Heart left ventricle (tissue), 16 donors: ENCODE measurements at regions of chrX and their contacts with region 1.

Region 1: GRCh38 chrX:38335382-38335781 is 8.1 kb upstream of the RPGR start:
- DNase-seq: no peak
- ATAC-seq: no peak
- H3K4me3 ChIP-seq: no peak overlapping the region
- H3K27ac ChIP-seq: no peak overlapping the region
- H3K4me1 ChIP-seq: no peaks in the 10 kb centered on the region
- H3K27me3 ChIP-seq: peaks cover 0 to 29% (median 0%) of the 10 kb centered on the region in 9 donors
- CTCF ChIP-seq: peak in 5 of 12 donors; percentile 19 to 38 (median 31)
- POLR2A ChIP-seq: no peak

Region 2: DNA sequence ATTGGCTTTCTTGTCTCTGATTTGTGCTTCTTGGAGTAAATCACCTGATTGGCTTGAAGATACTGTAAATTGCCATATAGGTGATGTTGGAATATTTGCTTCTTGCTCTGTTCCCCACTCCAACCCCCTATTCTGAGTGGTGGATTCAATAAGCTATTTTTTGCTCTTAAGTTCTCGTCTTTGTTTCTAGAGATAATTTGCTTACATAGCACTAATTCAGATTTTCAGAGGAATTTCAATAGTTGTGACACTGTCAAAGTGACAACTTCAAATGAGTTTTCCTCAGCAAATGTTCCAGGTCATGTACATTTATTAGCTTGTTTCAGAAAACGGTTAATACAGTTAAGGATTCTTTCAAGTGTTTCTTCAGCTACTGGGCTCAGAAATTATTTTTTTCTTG is 745.3 kb before region 1 on chrX:
- intact Hi-C with region 1: no loop called
- DNase-seq: no peak
- ATAC-seq: no peak
- H3K4me3 ChIP-seq: no peak overlapping the region
- H3K27ac ChIP-seq: no peak overlapping the region
- H3K4me1 ChIP-seq: no peaks in the 10 kb centered on the region
- H3K27me3 ChIP-seq: peaks cover 0 to 14% (median 0%) of the 10 kb centered on the region in 9 donors
- CTCF ChIP-seq: no peak
- POLR2A ChIP-seq: no peak

Region 3: GRCh38 chrX:37816766-37817165 is 518.6 kb before region 1 on chrX:
- intact Hi-C with region 1: no loop called
- DNase-seq: no peak
- ATAC-seq: no peak
- H3K4me3 ChIP-seq: no peak overlapping the region
- H3K27ac ChIP-seq: no peak overlapping the region
- H3K4me1 ChIP-seq: peaks cover 0 to 24% (median 0%) of the 10 kb centered on the region in 12 donors
- H3K27me3 ChIP-seq: peaks cover 0 to 32% (median 0%) of the 10 kb centered on the region in 9 donors
- CTCF ChIP-seq: no peak
- POLR2A ChIP-seq: no peak

Region 4: DNA sequence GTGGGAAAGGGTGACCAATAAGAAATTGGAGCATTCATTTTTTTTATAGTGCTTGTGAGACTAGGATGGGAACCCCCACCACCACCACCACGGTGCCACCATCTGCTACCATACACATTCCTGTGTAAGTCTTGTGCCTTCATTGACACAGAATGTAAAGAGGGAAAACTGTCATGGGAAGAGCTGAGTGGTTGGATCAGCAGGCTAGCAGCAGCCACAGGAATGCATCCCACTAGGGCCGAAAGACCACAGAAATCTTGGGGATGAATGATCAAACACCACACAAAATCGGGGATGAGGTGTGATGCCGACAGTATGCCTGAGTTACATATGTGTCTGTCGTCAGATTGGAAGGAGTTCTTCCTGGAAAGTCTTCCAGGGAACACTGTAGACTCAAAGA is 183.9 kb before region 1 on chrX:
- intact Hi-C with region 1: no loop called
- DNase-seq: no peak
- ATAC-seq: no peak
- H3K4me3 ChIP-seq: no peak overlapping the region
- H3K27ac ChIP-seq: no peak overlapping the region
- H3K4me1 ChIP-seq: peaks cover 0 to 4% (median 0%) of the 10 kb centered on the region in 12 donors
- H3K27me3 ChIP-seq: peaks cover 0 to 7% (median 0%) of the 10 kb centered on the region in 9 donors
- CTCF ChIP-seq: no peak
- POLR2A ChIP-seq: no peak

Region 5: DNA sequence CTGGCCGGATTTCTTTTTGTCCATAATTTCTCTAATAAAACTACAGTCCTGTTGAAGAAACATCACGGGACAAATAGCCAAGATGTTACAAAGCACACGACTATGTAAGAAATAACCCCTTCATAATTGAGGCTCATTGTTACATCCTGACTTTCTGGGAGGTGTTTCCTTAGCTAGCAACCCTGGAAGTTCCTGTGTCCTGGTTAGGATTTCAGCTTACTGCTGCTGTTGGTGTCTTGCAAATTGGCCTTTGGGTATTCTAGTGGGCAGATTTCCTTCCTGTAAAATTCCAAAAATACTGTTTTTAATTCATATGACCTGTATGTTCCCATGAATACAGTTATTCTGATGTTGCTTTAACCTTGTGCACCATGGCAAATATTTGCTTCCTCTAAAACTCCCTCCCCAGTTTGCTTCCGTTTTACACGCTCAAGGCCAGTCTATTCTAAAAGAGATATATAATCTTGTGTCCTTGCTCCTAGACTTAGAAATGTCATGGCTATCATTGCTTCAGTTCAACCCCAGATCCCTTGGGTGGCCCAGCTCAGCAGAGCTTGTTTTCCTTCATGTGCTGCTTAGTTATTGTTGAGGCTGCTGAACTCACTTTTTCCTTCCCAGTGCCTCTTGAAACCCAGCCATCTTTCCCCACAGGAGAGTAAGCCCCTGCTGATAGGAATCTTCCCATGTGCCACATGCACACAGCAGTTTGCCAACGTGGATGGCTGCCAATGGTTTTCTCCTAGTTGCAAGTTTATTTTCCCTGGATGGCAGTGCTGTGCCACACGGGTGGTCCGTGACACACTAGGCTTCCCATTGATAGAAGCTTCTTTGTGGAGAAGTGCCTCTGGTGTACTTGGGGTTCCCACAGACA is 301.8 kb after region 1 on chrX:
- intact Hi-C with region 1: loop called in 1 of 10 experiments (anchors 10 kb)
- DNase-seq: peak in 1 of 5 donors; percentile 26
- ATAC-seq: peak in 2 of 4 donors; percentile 28 to 54
- H3K4me3 ChIP-seq: no peak overlapping the region
- H3K27ac ChIP-seq: peak overlapping the region in 8 of 12 donors; percentile 18 to 53 (median 28)
- H3K4me1 ChIP-seq: peaks cover 0 to 5% (median under 1%) of the 10 kb centered on the region in 12 donors
- H3K27me3 ChIP-seq: peaks cover 0 to 6% (median 0%) of the 10 kb centered on the region in 9 donors
- CTCF ChIP-seq: no peak
- POLR2A ChIP-seq: no peak